Activated CD8-positive, alpha-beta T cell treated with anti-CD3 and anti-CD28 coated beads, Interleukin-2, amount 10 ng/mL, durations not matched to agents 7 days and 5 days (primary cell): ENCODE measurements at regions of chr17 and their contacts with region 1.

Region 1: GRCh38 chr17:80101011-80101945 is at the start of gene GAA:
- DNase-seq: peak; percentile 89
- ATAC-seq: peak; percentile 90
- H3K4me3 Mint-ChIP-seq: peak within 1 kb of the TSS; percentile 89
- H3K27ac Mint-ChIP-seq: peak within 1 kb of the TSS; percentile 86
- H3K4me1 Mint-ChIP-seq: peaks cover 26% of the 10 kb centered on the region
- H3K27me3 Mint-ChIP-seq: peaks cover 6% of the 10 kb centered on the region
- total RNA-seq, gene GAA: 18.1 to 22.3 TPM

Region 2: GRCh38 chr17:79986411-79987186 is 114.7 kb before region 1 on chr17:
- CTCF ChIA-PET with region 1: no interaction called
- POLR2A ChIA-PET with region 1: no interaction called
- DNase-seq: no peak
- ATAC-seq: no peak
- H3K4me3 Mint-ChIP-seq: no peak overlapping the region
- H3K27ac Mint-ChIP-seq: no peak overlapping the region
- H3K4me1 Mint-ChIP-seq: peaks cover 7% of the 10 kb centered on the region
- H3K27me3 Mint-ChIP-seq: no peaks in the 10 kb centered on the region

Region 3: DNA sequence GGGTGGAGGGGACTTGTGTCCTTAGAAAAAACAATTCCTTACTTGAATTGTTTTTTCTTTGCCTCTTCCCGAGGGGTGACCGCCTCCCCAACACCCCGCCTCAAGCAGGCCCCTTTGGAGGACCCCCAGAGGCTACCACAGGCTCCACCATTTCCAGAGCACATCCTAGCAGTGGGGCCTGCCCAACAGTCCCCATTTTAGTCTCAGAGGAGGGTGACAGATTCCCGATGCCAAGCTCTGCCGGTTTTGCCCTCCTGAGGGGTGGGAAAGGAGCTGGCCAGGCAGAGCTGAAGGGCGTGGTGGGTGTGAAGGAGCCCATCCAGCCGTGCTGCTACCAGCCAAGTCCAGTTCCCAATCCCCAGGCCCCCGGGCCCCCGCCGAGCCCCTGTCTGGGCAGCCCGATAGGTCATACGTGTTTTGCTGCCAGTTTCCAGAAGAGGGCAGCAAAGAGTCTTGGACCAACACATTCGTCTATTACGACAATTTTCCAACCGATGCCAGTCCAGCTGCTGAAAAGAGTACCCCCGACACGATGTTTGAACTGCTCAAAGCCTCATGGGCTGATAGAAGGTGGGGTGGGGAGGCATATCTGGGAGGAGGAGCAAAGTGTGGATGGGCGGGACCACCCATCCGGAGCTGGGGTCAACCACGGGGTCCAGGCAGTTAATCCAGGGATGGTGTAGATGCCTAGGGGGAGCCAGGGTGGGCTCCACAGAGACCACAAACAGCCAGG is 18.7 kb before region 1 on chr17:
- CTCF ChIA-PET with region 1: interaction called, 26 read pairs
- POLR2A ChIA-PET with region 1: no interaction called
- DNase-seq: peak; percentile 69
- ATAC-seq: peak; percentile 67
- H3K4me3 Mint-ChIP-seq: no peak overlapping the region
- H3K27ac Mint-ChIP-seq: peak overlapping the region; percentile 39
- H3K4me1 Mint-ChIP-seq: peaks cover 3% of the 10 kb centered on the region
- H3K27me3 Mint-ChIP-seq: peaks cover 2% of the 10 kb centered on the region

Region 4: GRCh38 chr17:80113033-80113484 is 11.8 kb after region 1 on chr17:
- CTCF ChIA-PET with region 1: interaction called, 26 read pairs
- POLR2A ChIA-PET with region 1: no interaction called
- DNase-seq: no peak
- ATAC-seq: no peak
- H3K4me3 Mint-ChIP-seq: no peak overlapping the region
- H3K27ac Mint-ChIP-seq: no peak overlapping the region
- H3K4me1 Mint-ChIP-seq: no peaks in the 10 kb centered on the region
- H3K27me3 Mint-ChIP-seq: peaks cover 3% of the 10 kb centered on the region

Region 5: GRCh38 chr17:80124351-80124981 is 23.2 kb after region 1 on chr17:
- CTCF ChIA-PET with region 1: interaction called, 15 read pairs
- POLR2A ChIA-PET with region 1: no interaction called
- DNase-seq: no peak
- ATAC-seq: peak; percentile 27
- H3K4me3 Mint-ChIP-seq: no peak overlapping the region
- H3K27ac Mint-ChIP-seq: no peak overlapping the region
- H3K4me1 Mint-ChIP-seq: no peaks in the 10 kb centered on the region
- H3K27me3 Mint-ChIP-seq: peaks cover 22% of the 10 kb centered on the region

Region 6: DNA sequence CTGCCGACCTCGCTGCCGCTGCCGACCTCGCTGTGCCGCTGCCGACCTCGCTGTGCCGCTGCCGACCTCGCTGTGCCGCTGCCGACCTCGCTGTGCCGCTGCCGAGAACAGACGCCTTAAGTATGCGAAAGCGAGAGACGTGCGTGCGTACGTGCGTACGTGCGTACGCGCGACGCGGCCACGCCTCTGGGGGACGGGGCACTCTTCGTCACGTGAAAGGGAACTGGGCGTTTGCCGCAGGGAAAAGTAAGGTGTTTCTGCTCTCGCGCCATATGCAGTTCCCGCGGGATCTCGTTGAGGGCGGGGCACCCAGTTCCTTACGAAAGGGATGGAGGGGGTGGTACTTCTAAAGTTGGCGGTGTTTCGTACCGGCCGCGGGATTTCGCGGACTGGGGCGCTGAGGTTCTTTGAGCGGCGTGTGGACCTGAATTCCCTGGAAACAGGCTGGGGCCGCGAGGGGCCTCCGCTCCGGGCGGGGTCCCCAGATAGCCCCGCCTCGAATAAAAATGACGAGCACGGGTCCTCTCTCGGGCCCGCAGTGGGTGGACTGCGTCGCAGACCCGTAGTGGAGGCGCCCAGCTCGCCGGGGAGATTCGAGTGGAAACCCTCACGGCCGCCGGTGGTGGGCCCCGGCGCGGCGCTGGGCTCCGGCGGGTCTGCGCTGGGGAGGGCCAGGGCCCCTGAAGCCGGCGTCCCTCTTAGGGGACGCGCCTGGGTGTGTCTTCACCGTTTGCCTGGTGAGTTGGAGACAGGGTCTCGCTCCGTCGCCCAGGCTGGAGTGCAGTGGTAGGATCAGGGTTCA is 46.0 kb after region 1 on chr17 and contains the start of gene EIF4A3:
- CTCF ChIA-PET with region 1: interaction called, 51 read pairs
- POLR2A ChIA-PET with region 1: interaction called, 11 read pairs
- DNase-seq: peak; percentile 99
- ATAC-seq: peak; percentile 82
- H3K4me3 Mint-ChIP-seq: peak within 1 kb of the TSS; percentile 91
- H3K27ac Mint-ChIP-seq: peak within 1 kb of the TSS; percentile 97
- H3K4me1 Mint-ChIP-seq: peaks cover 41% of the 10 kb centered on the region
- H3K27me3 Mint-ChIP-seq: no peaks in the 10 kb centered on the region
- total RNA-seq, gene EIF4A3: 181 to 183 TPM

Region 7: DNA sequence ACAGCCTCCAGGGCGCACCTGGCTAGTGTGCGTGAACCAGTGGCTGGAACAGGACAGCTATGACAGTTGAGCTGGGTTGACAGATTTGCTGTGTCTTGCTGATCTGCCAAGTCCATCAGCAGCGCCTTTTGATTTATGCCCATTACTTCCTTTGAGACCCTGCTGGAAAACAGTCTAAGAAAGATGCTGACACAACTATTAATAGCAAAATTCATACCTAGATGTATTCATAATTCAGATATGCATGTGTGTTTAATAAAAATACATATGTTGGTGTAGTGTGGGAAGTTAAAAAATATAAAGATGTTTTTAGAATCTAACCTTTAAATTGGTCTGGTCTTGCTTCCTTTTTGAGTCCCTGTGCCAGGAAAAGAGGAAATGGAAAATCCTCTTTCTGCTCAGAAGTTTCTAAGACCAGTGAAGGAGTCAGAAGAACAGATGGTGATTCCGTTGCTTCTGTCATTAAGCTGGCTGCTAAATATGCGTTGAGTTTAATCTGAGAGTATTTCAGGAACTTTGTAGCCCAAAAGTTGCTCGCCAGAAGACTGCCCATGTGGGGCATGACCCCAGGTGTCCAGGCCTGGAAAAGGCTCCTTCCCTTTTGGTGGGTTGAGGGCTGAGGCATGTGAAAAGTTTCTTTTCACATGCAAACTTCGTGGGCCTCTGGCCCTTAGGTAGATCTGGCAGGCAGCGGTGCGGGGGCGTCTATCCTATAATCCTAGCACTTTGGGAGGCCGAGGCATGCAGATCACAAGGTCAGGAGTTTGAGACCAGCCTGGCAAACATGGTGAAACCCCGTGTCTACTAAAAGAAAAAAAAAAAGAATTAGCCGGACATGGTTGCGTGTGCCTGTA is 273.7 kb after region 1 on chr17:
- CTCF ChIA-PET with region 1: no interaction called
- POLR2A ChIA-PET with region 1: no interaction called
- DNase-seq: no peak
- ATAC-seq: no peak
- H3K4me3 Mint-ChIP-seq: no peak overlapping the region
- H3K27ac Mint-ChIP-seq: no peak overlapping the region
- H3K4me1 Mint-ChIP-seq: no peaks in the 10 kb centered on the region
- H3K27me3 Mint-ChIP-seq: no peaks in the 10 kb centered on the region